Activated CD4-positive, alpha-beta T cell treated with anti-CD3 and anti-CD28 coated beads for 36 hours (primary cell): ENCODE measurements at regions of chr10 and their contacts with region 1.

Region 1: GRCh38 chr10:11515596-11516430 is 95.6 kb downstream of the USP6NL start:
- DNase-seq: peak; percentile 65
- ATAC-seq: peak; percentile 76
- H3K4me3 Mint-ChIP-seq: no peak overlapping the region
- H3K27ac Mint-ChIP-seq: no peak overlapping the region
- H3K4me1 Mint-ChIP-seq: peaks cover 21% of the 10 kb centered on the region
- H3K27me3 Mint-ChIP-seq: peaks cover 7% of the 10 kb centered on the region

Region 2: GRCh38 chr10:11505639-11506038 is 10.2 kb before region 1 on chr10:
- CTCF ChIA-PET with region 1: interaction called, 22 read pairs
- POLR2A ChIA-PET with region 1: no interaction called
- intact Hi-C with region 1: no loop called
- DNase-seq: peak; percentile 72
- ATAC-seq: peak; percentile 99
- H3K4me3 Mint-ChIP-seq: no peak overlapping the region
- H3K27ac Mint-ChIP-seq: peak overlapping the region; percentile 44
- H3K4me1 Mint-ChIP-seq: peaks cover 16% of the 10 kb centered on the region
- H3K27me3 Mint-ChIP-seq: no peaks in the 10 kb centered on the region

Region 3: GRCh38 chr10:11578802-11579255 is 63.0 kb after region 1 on chr10:
- CTCF ChIA-PET with region 1: interaction called, 5 read pairs
- POLR2A ChIA-PET with region 1: no interaction called
- intact Hi-C with region 1: loop called (anchors 2 kb)
- DNase-seq: peak; percentile 77
- ATAC-seq: peak; percentile 74
- H3K4me3 Mint-ChIP-seq: no peak overlapping the region
- H3K27ac Mint-ChIP-seq: peak overlapping the region; percentile 21
- H3K4me1 Mint-ChIP-seq: peaks cover 46% of the 10 kb centered on the region
- H3K27me3 Mint-ChIP-seq: peaks cover 5% of the 10 kb centered on the region

Region 4: DNA sequence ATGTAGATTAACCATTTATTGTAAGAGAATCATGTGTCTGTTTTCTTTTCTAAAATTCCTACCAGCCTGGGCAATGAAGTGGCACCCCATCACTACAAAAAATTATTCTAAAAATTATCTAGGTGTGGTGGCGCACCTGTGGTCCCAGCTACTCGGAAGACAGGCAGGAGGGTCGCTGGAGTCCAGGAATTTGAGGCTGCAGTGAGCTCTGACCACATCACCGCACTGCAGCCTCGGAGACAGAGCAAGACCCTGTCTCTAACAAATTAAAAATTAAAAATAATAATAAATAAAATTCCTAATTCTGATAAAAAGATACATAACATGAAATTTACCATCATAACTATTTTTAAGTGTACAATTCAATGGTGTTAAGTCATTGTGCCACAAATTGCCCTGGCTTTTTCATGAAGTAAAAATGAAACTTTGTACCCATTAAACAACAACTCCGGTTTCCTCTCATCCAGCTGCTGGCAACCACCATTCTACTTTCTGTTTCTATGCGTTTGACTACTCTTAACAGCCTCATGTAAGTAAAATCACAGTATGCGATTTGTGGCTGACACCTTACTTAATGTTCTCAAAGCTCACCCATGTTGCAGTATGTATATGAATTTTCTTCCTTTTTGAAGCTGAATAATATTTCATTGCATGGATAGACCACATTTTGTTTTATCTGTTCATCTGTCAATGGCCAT is 116.2 kb after region 1 on chr10:
- CTCF ChIA-PET with region 1: interaction called, 11 read pairs
- POLR2A ChIA-PET with region 1: no interaction called
- intact Hi-C with region 1: loop called in 1 of 2 experiments (anchors 1 kb)
- DNase-seq: peak; percentile 63
- ATAC-seq: peak; percentile 99
- H3K4me3 Mint-ChIP-seq: no peak overlapping the region
- H3K27ac Mint-ChIP-seq: no peak overlapping the region
- H3K4me1 Mint-ChIP-seq: peaks cover 14% of the 10 kb centered on the region
- H3K27me3 Mint-ChIP-seq: peaks cover 5% of the 10 kb centered on the region

Region 5: DNA sequence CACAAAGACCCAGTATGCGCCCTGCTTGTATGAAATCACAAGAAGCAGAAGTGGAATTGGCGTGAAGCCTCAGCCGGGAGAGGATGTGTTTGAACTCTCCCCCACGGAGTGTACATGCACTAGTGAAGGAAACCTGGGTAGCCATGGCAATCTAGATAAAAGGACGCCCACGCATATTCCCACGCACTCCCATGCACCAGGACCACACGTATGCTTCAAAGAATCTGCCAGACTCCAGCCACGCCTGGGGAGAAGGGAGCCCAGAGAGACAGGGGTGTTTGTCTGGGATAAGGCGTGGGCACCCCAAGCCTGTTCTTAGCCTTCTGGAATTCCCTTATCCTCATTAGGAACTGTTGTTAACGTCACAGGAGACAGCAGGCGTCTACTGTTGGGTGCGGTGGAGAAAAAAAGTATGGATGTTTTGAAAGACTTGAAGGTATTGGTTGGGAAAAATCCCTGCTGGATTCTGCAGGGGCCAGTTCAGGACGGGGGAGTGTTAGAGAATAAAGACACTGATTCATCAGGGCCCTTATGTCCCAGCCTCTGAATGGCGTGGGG is 197.5 kb after region 1 on chr10:
- CTCF ChIA-PET with region 1: interaction called, 5 read pairs
- POLR2A ChIA-PET with region 1: no interaction called
- intact Hi-C with region 1: loop called in 1 of 2 experiments (anchors 1 kb)
- DNase-seq: no peak
- ATAC-seq: no peak
- H3K4me3 Mint-ChIP-seq: no peak overlapping the region
- H3K27ac Mint-ChIP-seq: no peak overlapping the region
- H3K4me1 Mint-ChIP-seq: peaks cover 28% of the 10 kb centered on the region
- H3K27me3 Mint-ChIP-seq: peaks cover 51% of the 10 kb centered on the region

Region 6: DNA sequence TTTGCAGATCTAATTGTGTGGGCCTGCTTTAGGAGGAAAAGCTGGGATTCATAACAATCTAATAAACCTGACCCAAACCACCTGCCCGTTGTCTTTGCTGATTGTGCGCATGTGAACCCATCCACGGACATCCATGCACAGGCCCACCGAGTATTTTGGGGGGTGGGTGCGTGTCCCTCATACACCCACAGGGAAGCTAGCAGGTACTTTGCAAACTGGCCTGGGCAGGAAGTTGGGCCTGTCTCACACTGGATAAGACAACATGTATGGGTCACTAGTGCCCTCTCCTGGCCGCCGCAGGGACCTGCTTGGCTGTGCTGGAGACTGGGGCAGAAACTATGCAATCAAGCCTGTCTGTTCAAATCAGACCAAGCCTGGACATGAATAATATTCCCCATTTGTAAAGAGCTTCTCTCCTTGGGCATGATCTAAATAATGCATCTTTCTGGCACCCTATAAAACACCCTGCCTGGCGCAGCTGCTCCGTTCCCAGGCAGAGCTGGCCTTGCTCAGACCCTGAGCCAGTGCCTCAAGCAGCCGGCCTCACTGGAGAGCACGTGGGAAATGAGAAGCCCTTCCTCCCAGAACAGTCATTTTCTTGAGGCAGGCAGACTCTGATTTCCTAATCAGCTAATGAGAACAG is 242.1 kb after region 1 on chr10:
- CTCF ChIA-PET with region 1: interaction called, 125 read pairs
- POLR2A ChIA-PET with region 1: interaction called, 3 read pairs
- intact Hi-C with region 1: loop called (anchors 1 kb)
- DNase-seq: peak; percentile 93
- ATAC-seq: peak; percentile 100
- H3K4me3 Mint-ChIP-seq: no peak overlapping the region
- H3K27ac Mint-ChIP-seq: peak overlapping the region; percentile 35
- H3K4me1 Mint-ChIP-seq: peaks cover 6% of the 10 kb centered on the region
- H3K27me3 Mint-ChIP-seq: no peaks in the 10 kb centered on the region

Region 7: DNA sequence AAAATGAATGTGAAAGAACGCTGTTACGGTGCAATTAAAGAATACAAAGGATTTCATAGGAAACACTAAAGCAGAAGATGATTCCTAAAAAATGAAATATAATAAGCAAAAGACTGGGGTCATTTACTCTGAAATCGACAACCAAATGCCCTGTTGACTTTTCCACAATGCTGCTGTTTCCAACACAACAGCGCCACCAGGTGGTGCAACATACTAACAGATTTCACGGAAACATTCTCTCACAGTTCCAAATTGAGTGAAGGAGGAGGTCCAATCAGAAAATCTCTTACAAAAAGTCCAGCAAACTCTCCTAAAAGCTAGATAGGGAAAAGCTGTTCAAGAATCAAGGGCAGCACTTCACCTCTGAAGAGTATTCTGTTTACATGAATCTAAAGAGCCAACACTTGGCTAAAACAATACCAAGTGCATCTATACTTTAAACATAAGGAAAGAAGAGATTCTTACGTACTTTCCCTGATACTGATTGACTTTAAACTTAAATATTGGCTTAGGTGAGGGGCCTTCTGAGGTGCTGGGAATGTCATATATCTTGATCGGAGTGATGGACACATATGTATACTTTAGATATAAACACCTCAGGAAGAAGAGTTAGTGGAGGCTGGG is 470.9 kb after region 1 on chr10:
- CTCF ChIA-PET with region 1: interaction called, 3 read pairs
- POLR2A ChIA-PET with region 1: no interaction called
- intact Hi-C with region 1: loop called (anchors 2 to 10 kb)
- DNase-seq: peak; percentile 88
- ATAC-seq: peak; percentile 66
- H3K4me3 Mint-ChIP-seq: no peak overlapping the region
- H3K27ac Mint-ChIP-seq: peak overlapping the region; percentile 69
- H3K4me1 Mint-ChIP-seq: peaks cover 7% of the 10 kb centered on the region
- H3K27me3 Mint-ChIP-seq: no peaks in the 10 kb centered on the region